CD8-positive, alpha-beta memory T cell (primary cell): ENCODE measurements at regions of chr10 and their contacts with region 1.

Region 1: GRCh38 chr10:33025039-33025438 is 67.0 kb upstream of the ITGB1 start:
- DNase-seq: no peak
- H3K4me3 ChIP-seq: no peak overlapping the region
- H3K4me3 Mint-ChIP-seq: peak overlapping the region in 6 of 7 donors; percentile 3 to 62 (median 22)
- H3K27ac ChIP-seq: no peak overlapping the region
- H3K27ac Mint-ChIP-seq: peak overlapping the region; percentile 2 to 81 (median 34)
- H3K4me1 ChIP-seq: peaks cover 36% of the 10 kb centered on the region
- H3K4me1 Mint-ChIP-seq: peaks cover 46 to 58% (median 49%) of the 10 kb centered on the region in 3 donors
- H3K27me3 ChIP-seq: no peaks in the 10 kb centered on the region
- H3K27me3 Mint-ChIP-seq: no peaks in the 10 kb centered on the region

Region 2: DNA sequence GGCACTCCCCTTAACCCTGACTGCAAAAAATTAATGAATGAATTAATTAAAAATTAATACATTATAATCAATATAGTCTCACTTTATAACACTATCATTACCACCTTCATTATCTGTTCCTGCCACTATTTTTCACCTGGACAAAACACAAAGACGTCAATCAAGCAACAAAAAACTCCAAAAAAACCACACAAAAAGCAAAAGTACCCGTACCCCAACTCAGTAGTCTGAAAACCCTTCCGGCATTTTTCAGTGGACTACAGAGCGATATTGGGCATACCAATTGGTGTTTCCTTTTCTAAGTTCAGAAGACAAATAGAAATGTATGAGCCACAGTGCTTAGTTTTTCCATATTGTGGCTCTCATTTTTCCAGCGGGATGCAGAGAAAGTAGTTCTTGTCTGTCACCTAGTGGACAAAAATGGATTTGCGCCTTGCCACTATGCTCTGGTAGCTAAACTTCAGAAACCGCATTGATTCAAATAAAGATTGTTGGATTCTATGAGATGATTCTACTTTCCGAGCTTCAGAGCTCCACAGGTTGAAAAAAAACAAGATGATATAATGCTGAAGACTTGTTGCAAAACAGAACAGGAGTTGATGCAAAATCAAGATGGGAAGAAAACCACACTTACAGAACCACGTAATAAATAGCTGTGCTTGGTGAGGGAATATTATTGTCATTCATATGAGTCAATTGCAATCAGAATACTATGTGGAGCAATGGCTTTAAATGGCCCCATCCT is 16.4 kb before region 1 on chr10:
- CTCF ChIA-PET with region 1: interaction called, 12 read pairs
- POLR2A ChIA-PET with region 1: no interaction called
- DNase-seq: peak; percentile 39 to 66 (median 46)
- H3K4me3 ChIP-seq: peak overlapping the region; percentile 63
- H3K4me3 Mint-ChIP-seq: peak overlapping the region; percentile 29 to 82 (median 64)
- H3K27ac ChIP-seq: peak overlapping the region; percentile 22
- H3K27ac Mint-ChIP-seq: peak overlapping the region; percentile 41 to 97 (median 92)
- H3K4me1 ChIP-seq: peaks cover 27% of the 10 kb centered on the region
- H3K4me1 Mint-ChIP-seq: peaks cover 44 to 60% (median 52%) of the 10 kb centered on the region in 3 donors
- H3K27me3 ChIP-seq: no peaks in the 10 kb centered on the region
- H3K27me3 Mint-ChIP-seq: peaks cover 0 to 2% of the 10 kb centered on the region in 2 donors